Activated CD4-positive, alpha-beta T cell treated with anti-CD3 and anti-CD28 coated beads for 36 hours (primary cell): ENCODE measurements at regions of chr2 and their contacts with region 1.

Region 1: GRCh38 chr2:112749755-112750559 is 14.5 kb downstream of the CKAP2L start:
- DNase-seq: peak; percentile 92
- ATAC-seq: peak; percentile 85
- H3K4me3 Mint-ChIP-seq: no peak overlapping the region
- H3K27ac Mint-ChIP-seq: no peak overlapping the region
- H3K4me1 Mint-ChIP-seq: peaks cover 12% of the 10 kb centered on the region
- H3K27me3 Mint-ChIP-seq: no peaks in the 10 kb centered on the region

Region 2: GRCh38 chr2:112301171-112301584 is 448.8 kb before region 1 on chr2:
- CTCF ChIA-PET with region 1: no interaction called
- POLR2A ChIA-PET with region 1: no interaction called
- intact Hi-C with region 1: no loop called
- DNase-seq: no peak
- ATAC-seq: no peak
- H3K4me3 Mint-ChIP-seq: no peak overlapping the region
- H3K27ac Mint-ChIP-seq: no peak overlapping the region
- H3K4me1 Mint-ChIP-seq: peaks cover 10% of the 10 kb centered on the region
- H3K27me3 Mint-ChIP-seq: no peaks in the 10 kb centered on the region

Region 3: GRCh38 chr2:112714836-112715631 is 34.9 kb before region 1 on chr2:
- CTCF ChIA-PET with region 1: no interaction called
- POLR2A ChIA-PET with region 1: no interaction called
- intact Hi-C with region 1: no loop called
- DNase-seq: no peak
- ATAC-seq: no peak
- H3K4me3 Mint-ChIP-seq: no peak overlapping the region
- H3K27ac Mint-ChIP-seq: no peak overlapping the region
- H3K4me1 Mint-ChIP-seq: peaks cover 9% of the 10 kb centered on the region
- H3K27me3 Mint-ChIP-seq: peaks cover 3% of the 10 kb centered on the region

Region 4: DNA sequence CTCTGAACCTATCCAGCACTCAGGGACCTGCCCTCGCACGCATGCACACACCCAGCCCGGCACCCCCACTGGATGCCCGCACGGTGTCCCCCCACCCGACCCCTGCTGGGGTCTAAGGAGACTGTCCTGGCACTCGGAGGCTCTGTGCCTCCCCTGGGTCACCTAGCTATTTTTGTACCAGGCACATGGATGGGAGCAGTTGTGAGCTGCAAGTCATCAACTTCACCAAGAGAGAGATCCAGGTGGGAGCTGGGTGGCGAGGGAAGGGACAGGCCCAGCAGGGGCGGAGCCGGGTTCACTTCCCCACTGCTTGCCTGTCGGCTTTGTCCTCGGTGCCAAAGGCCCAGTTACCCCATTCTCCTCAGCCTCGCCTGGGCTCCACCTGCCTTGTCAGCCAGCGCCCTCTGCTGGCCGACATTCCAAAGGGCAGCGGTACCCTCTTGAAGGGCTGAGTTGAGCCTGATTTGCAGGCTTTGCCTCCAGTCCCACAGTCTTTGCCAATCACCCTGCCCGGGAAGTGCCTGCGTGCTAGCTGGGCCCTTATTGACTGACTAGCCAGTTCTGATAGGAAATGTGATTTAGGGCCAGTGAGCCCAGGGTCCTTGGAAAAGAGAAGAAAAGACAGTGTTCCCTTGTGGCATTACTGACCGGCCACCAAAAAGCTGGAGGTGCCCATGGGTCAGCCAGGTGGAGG is 23.3 kb before region 1 on chr2:
- CTCF ChIA-PET with region 1: interaction called, 40 read pairs
- POLR2A ChIA-PET with region 1: interaction called, 3 read pairs
- intact Hi-C with region 1: no loop called
- DNase-seq: peak; percentile 94
- ATAC-seq: peak; percentile 98
- H3K4me3 Mint-ChIP-seq: no peak overlapping the region
- H3K27ac Mint-ChIP-seq: no peak overlapping the region
- H3K4me1 Mint-ChIP-seq: peaks cover 3% of the 10 kb centered on the region
- H3K27me3 Mint-ChIP-seq: no peaks in the 10 kb centered on the region

Region 5: GRCh38 chr2:112764071-112765044 is 14.4 kb after region 1 on chr2 and contains the start of gene CKAP2L:
- CTCF ChIA-PET with region 1: interaction called, 42 read pairs
- POLR2A ChIA-PET with region 1: no interaction called
- intact Hi-C with region 1: no loop called
- DNase-seq: peak; percentile 98
- ATAC-seq: peak; percentile 97
- H3K4me3 Mint-ChIP-seq: peak within 1 kb of the TSS; percentile 96
- H3K27ac Mint-ChIP-seq: peak within 1 kb of the TSS; percentile 95
- H3K4me1 Mint-ChIP-seq: peaks cover 25% of the 10 kb centered on the region
- H3K27me3 Mint-ChIP-seq: no peaks in the 10 kb centered on the region
- total RNA-seq, gene CKAP2L: 38.4 to 46.7 TPM

Region 6: DNA sequence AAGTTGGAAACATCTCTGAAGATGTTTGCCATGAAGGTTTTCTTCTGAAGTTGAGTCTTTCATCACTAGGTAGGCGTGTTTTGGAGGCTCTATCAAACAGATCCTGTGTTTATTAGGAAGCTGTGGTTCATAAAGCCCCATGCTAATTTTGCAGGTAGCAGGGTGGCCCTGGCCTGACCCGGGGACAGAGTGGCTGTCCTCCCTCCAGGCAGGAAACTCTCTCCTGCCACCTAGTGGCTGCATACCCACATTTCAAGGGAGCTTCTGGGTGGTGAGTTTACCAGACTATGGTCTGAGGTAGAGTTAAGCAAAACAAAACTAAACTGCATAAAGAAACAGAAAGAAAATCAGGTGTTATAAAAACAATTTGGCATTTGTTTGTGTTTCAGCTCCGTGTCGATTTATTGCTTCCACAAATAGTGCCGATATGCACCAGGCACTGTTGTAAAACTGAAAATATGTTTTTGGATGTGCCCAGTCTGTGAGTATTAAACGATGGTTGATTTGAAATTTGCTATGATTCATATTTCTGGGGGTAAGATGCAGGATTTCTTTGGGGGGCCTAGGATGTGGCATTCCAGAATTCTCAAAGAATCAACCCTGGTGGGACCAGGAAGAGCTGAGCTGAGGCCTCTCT is 135.0 kb after region 1 on chr2:
- CTCF ChIA-PET with region 1: interaction called, 98 read pairs
- POLR2A ChIA-PET with region 1: no interaction called
- intact Hi-C with region 1: loop called (anchors 1 kb)
- DNase-seq: peak; percentile 85
- ATAC-seq: peak; percentile 87
- H3K4me3 Mint-ChIP-seq: no peak overlapping the region
- H3K27ac Mint-ChIP-seq: peak overlapping the region; percentile 1
- H3K4me1 Mint-ChIP-seq: peaks cover 23% of the 10 kb centered on the region
- H3K27me3 Mint-ChIP-seq: no peaks in the 10 kb centered on the region

Region 7: DNA sequence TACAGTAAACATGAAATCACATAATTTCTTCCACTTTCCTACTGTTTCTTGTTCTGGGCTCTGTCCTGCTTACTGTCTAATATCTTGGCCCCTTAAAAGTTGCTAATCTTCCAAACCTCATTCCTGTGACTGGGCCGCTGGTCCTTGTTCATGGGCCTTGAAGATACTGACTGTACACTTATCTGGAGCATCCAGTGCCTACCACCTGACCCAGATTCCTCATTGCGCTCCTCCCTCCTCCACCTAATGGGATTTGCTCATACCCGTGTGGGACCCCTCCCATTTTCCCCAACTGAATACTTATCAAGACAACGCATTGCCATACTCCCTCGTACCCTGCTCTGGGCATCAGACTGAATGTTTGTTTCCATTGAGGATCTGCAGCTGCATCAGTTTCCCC is 154.9 kb after region 1 on chr2:
- CTCF ChIA-PET with region 1: interaction called, 15 read pairs
- POLR2A ChIA-PET with region 1: interaction called, 8 read pairs
- intact Hi-C with region 1: no loop called
- DNase-seq: no peak
- ATAC-seq: no peak
- H3K4me3 Mint-ChIP-seq: no peak overlapping the region
- H3K27ac Mint-ChIP-seq: no peak overlapping the region
- H3K4me1 Mint-ChIP-seq: no peaks in the 10 kb centered on the region
- H3K27me3 Mint-ChIP-seq: no peaks in the 10 kb centered on the region

Region 8: GRCh38 chr2:112958428-112959108 is 208.6 kb after region 1 on chr2:
- CTCF ChIA-PET with region 1: interaction called, 20 read pairs
- POLR2A ChIA-PET with region 1: no interaction called
- intact Hi-C with region 1: loop called (anchors 1 to 5 kb)
- DNase-seq: peak; percentile 48
- ATAC-seq: peak; percentile 94
- H3K4me3 Mint-ChIP-seq: no peak overlapping the region
- H3K27ac Mint-ChIP-seq: no peak overlapping the region
- H3K4me1 Mint-ChIP-seq: no peaks in the 10 kb centered on the region
- H3K27me3 Mint-ChIP-seq: no peaks in the 10 kb centered on the region

Region 9: DNA sequence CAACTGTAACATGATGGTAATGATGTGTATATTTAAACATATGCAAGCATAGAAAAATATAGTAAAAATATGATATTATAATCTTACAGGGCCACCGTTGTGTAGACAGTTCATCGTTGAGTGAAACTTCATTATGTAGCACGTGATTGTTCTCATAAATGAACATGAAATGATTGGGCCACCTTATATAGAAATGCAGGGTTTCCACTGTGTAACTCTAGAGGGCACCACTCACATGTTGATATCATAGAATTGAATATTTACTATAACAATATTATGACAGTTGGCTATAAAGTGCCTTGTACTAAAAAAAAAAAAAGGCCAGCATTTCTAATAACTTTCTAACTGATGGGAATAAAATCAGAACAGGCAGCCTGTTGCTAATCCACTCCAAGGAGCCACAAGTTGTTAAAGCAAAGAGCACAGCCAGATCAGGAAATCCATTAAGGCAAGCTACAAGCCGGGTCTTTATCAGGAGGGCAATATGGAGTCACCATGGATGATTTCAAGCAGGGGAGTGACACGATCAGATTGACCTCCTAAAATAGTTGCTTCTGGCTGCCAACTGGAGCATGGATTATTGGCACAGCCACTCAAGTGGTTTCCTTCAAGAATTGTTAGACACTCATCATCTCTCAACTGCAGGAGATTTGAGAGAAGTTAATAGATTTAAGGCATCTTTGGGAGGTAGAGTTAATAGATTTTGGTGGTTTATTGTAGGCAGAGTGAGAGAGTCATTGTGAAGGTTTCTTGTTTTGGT is 334.5 kb after region 1 on chr2:
- CTCF ChIA-PET with region 1: no interaction called
- POLR2A ChIA-PET with region 1: no interaction called
- intact Hi-C with region 1: no loop called
- DNase-seq: no peak
- ATAC-seq: peak; percentile 77
- H3K4me3 Mint-ChIP-seq: no peak overlapping the region
- H3K27ac Mint-ChIP-seq: peak overlapping the region; percentile 3
- H3K4me1 Mint-ChIP-seq: peaks cover 12% of the 10 kb centered on the region
- H3K27me3 Mint-ChIP-seq: peaks cover 2% of the 10 kb centered on the region